ENCODE measurements at regions of chr12 and their contacts with region 1.

Region 1: DNA sequence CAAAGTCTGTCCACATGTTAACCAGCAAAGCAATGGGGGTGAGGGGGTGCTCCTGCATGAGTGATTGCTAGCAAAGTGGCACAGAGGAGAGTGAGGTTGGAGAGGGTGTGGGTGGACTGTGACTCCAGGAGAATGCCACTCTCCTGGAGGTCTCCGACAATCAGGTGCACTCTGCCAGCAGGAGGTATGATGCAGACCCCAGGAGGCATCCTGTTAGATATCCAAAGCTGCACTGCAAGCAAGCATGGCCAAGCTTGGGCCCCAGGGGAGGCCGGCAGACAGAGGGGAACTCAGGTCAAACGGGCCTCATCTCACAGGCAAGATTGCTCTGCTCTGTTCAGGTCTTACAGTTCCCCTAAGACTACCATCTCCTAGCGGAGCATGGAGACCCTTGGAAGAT is 73.5 kb upstream of the ALX1 start:
- DNase-seq: no peak
- ATAC-seq: no peak
- H3K4me3 ChIP-seq: no peak overlapping the region
- H3K4me3 Mint-ChIP-seq: no peak overlapping the region
- H3K27ac ChIP-seq: no peak overlapping the region
- H3K27ac Mint-ChIP-seq: no peak overlapping the region
- H3K4me1 ChIP-seq: no peaks in the 10 kb centered on the region
- H3K4me1 Mint-ChIP-seq: no peaks in the 10 kb centered on the region
- H3K27me3 ChIP-seq: no peaks in the 10 kb centered on the region
- H3K27me3 Mint-ChIP-seq: no peaks in the 10 kb centered on the region
- CTCF ChIP-seq: no peak

Region 2: GRCh38 chr12:84955298-84955697 is 251.2 kb before region 1 on chr12:
- intact Hi-C with region 1: no loop called
- DNase-seq: no peak
- ATAC-seq: no peak
- H3K4me3 ChIP-seq: no peak overlapping the region
- H3K4me3 Mint-ChIP-seq: no peak overlapping the region
- H3K27ac ChIP-seq: no peak overlapping the region
- H3K27ac Mint-ChIP-seq: no peak overlapping the region
- H3K4me1 ChIP-seq: no peaks in the 10 kb centered on the region
- H3K4me1 Mint-ChIP-seq: no peaks in the 10 kb centered on the region
- H3K27me3 ChIP-seq: no peaks in the 10 kb centered on the region
- H3K27me3 Mint-ChIP-seq: no peaks in the 10 kb centered on the region
- CTCF ChIP-seq: no peak

Region 3: GRCh38 chr12:85188609-85189008 is 17.9 kb before region 1 on chr12:
- intact Hi-C with region 1: no loop called
- DNase-seq: no peak
- ATAC-seq: no peak
- H3K4me3 ChIP-seq: no peak overlapping the region
- H3K4me3 Mint-ChIP-seq: no peak overlapping the region
- H3K27ac ChIP-seq: no peak overlapping the region
- H3K27ac Mint-ChIP-seq: no peak overlapping the region
- H3K4me1 ChIP-seq: no peaks in the 10 kb centered on the region
- H3K4me1 Mint-ChIP-seq: no peaks in the 10 kb centered on the region
- H3K27me3 ChIP-seq: no peaks in the 10 kb centered on the region
- H3K27me3 Mint-ChIP-seq: no peaks in the 10 kb centered on the region
- CTCF ChIP-seq: no peak

Region 4: GRCh38 chr12:85277900-85278597 is 71.5 kb after region 1 on chr12:
- intact Hi-C with region 1: loop called (anchors 2 kb)
- DNase-seq: no peak
- ATAC-seq: no peak
- H3K4me3 ChIP-seq: no peak overlapping the region
- H3K4me3 Mint-ChIP-seq: no peak overlapping the region
- H3K27ac ChIP-seq: no peak overlapping the region
- H3K27ac Mint-ChIP-seq: no peak overlapping the region
- H3K4me1 ChIP-seq: peaks cover 8% of the 10 kb centered on the region
- H3K4me1 Mint-ChIP-seq: peaks cover 0 to 11% of the 10 kb centered on the region in 2 donors
- H3K27me3 ChIP-seq: peaks cover 19% of the 10 kb centered on the region
- H3K27me3 Mint-ChIP-seq: peaks cover 49 to 71% of the 10 kb centered on the region in 2 donors
- CTCF ChIP-seq: no peak

Measured in natural killer cell (primary cell).